Panc1 (cell line): ENCODE measurements at regions of chr7 and their contacts with region 1.

Region 1: DNA sequence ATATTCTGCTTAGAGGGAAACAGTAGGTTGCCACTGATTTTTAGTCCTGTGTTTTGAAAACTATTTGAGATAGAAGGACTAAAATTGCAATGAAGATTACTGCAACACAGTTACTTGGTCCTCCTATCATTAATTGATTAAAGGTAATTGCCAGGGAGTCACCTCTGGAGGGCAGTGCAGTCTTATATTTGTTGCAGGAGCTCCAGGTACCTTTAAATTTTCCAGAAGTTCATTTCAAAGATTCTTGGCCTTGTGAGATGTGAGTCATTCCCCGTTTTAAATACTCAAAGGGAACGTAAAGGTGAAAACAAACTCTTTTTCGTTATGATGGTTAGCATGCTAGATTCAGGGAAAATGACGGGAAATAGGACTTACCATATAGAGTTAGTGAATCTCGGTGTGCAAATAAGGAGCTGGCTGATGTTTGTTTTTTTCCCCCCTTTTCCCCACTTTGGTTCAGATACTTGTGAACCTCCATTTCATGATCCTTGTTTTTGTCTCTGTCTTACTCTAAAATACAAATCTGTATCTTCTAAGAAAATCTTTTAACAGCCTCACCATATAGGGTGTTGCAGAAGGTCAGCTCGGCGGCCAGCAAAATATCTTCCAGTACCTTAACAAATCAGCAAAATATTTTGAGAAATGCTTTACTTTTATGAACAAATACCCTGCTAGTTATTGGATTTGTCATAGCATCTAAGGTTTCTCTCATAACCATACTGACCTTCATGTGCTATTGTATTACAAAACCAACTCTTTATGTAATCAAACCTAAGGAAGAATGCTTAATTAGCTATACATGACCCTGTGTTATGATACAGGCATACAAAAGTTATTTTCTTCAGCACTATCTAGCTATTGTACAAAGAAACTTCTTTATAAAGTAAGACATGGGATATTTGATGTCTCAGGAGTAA is 143.0 kb upstream of the HDAC9 start:
- DNase-seq: peak; percentile 58
- ATAC-seq: peak; percentile 87
- H3K4me3 ChIP-seq: no peak overlapping the region; a peak in 1 of 4 replicates
- H3K27ac ChIP-seq: peak overlapping the region; percentile 67
- H3K4me1 ChIP-seq: peaks cover 32% of the 10 kb centered on the region
- H3K27me3 ChIP-seq: no peaks in the 10 kb centered on the region
- CTCF ChIP-seq: peak; percentile 80; the same call in 1 of the 2 replicates

Region 2: DNA sequence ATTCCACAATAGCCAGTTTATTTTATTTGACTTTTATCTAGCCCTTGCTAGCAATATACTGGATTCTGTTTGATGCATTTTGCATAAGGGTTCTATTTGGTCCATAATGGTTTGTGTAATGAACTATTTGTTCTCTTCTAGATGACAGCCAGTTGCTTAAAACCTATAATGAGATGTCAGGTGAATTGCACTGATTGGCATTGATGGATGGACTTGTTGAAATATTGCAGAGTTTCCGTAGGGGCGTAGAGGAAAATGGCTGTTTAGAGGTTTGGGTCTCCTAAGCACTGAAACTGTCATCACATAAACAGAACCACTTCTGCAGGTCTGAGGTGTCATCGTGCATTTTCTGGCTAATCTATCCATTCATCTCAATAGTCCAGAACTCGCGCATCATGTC is 18.0 kb after region 1 on chr7:
- CTCF ChIA-PET with region 1: no interaction called
- POLR2A ChIA-PET with region 1: no interaction called
- in situ Hi-C with region 1: no loop called
- intact Hi-C with region 1: no loop called
- DNase-seq: no peak
- ATAC-seq: no peak
- H3K4me3 ChIP-seq: no peak overlapping the region
- H3K27ac ChIP-seq: no peak overlapping the region
- H3K4me1 ChIP-seq: no peaks in the 10 kb centered on the region
- H3K27me3 ChIP-seq: no peaks in the 10 kb centered on the region
- CTCF ChIP-seq: no peak

Region 3: DNA sequence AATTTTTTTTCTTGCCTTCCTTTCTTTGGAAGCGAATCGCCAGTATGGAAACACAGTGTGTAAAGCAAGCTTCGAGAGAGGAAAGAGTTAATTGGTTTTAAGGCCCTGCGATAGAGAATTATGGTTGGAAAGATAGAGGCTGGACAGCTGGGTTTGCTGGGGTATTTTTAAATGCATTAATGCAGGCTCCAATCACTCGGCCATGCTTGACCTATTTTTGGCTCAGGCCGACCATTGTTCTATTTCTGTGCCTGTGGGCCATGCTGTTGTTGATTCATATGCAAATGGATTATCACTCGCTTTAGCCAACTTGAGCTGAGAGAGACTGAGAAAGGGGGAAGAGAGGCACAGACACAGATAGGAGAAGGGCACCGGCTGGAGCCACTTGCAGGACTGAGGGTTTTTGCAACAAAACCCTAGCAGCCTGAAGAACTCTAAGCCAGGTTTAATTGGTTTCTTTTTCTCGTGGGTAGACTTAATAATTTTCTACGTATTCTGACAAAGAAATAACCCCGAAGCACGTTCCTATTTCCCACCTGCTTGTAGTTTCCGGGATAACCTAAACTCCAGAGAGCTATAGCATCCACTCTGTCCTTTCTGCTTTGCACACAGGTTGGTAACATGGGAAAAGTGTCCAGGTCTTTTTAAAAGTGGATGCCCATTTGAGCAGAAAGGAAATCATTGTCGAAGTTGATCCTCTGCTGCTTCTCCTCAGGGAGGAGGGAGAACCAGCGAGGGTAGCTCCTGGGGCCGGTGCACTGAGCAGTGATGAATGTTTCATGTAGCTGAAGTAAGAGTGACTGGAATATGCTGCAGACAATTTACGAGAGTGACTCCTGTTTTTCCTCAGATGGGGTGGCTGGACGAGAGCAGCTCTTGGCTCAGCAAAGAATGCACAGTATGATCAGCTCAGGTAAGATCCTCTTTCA is 143.1 kb after region 1 on chr7 and contains the start of gene HDAC9:
- CTCF ChIA-PET with region 1: no interaction called
- POLR2A ChIA-PET with region 1: no interaction called
- in situ Hi-C with region 1: no loop called
- intact Hi-C with region 1: loop called (anchors 10 kb)
- DNase-seq: no peak
- ATAC-seq: peak; percentile 91
- H3K4me3 ChIP-seq: peak within 1 kb of the TSS; percentile 44 to 64
- H3K27ac ChIP-seq: peak within 1 kb of the TSS; percentile 74
- H3K4me1 ChIP-seq: peaks cover 29% of the 10 kb centered on the region
- H3K27me3 ChIP-seq: no peaks in the 10 kb centered on the region
- CTCF ChIP-seq: no peak
- total RNA-seq, gene HDAC9: 17.1 TPM

Region 4: DNA sequence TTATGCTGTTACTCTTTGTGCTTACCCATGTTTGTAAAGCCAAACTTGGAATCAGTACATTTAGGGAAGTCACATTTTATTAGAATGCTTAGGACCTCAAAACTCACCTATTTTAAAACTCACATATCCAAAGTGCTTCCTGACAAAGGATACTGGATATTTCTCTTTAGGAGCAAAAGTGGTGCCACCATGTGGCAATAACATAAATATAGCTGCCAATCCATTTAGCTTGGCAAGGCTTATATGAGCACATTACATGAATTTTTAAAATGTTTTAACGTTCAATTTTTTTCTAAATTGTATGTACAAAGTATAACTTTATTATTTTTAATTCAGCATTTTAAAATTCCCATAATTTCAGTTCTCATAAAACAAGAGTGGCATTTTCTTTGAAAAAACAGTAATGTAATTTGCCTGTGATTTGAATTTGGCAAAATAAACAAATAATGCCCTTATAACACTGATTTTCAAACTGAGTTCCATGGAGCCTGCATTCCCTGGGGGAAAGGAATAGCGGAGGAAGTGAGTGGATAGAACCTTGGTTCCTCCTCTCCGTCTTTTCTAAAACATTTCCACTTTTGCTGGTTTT is 218.4 kb after region 1 on chr7:
- CTCF ChIA-PET with region 1: interaction called, 43 read pairs
- POLR2A ChIA-PET with region 1: no interaction called
- in situ Hi-C with region 1: no loop called
- intact Hi-C with region 1: loop called (anchors 2 kb)
- DNase-seq: no peak
- ATAC-seq: peak; percentile 87
- H3K4me3 ChIP-seq: no peak overlapping the region
- H3K27ac ChIP-seq: peak overlapping the region; percentile 64
- H3K4me1 ChIP-seq: peaks cover 6% of the 10 kb centered on the region
- H3K27me3 ChIP-seq: no peaks in the 10 kb centered on the region
- CTCF ChIP-seq: peak; percentile 73; the same call in 1 of the 2 replicates

Region 5: DNA sequence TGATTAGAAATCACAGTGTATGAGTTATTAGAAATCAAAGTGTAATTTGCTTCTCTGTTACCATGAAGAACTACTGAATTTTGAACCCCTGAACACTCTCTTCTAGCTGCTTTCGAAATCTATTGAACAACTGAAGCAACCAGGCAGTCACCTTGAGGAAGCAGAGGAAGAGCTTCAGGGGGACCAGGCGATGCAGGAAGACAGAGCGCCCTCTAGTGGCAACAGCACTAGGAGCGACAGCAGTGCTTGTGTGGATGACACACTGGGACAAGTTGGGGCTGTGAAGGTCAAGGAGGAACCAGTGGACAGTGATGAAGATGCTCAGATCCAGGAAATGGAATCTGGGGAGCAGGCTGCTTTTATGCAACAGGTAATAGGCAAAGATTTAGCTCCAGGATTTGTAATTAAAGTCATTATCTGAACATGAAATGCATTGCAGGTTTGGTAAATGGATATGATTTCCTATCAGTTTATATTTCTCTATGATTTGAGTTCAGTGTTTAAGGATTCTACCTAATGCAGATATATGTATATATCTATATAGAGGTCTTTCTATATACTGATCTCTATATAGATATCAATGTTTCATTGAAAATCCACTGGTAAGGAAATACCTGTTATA is 313.6 kb after region 1 on chr7:
- CTCF ChIA-PET with region 1: interaction called, 5 read pairs
- POLR2A ChIA-PET with region 1: no interaction called
- in situ Hi-C with region 1: no loop called
- intact Hi-C with region 1: loop called (anchors 5 kb)
- DNase-seq: peak; percentile 68
- ATAC-seq: peak; percentile 93
- H3K4me3 ChIP-seq: no peak overlapping the region
- H3K27ac ChIP-seq: no peak overlapping the region
- H3K4me1 ChIP-seq: peaks cover 12% of the 10 kb centered on the region; the same call in 1 of the 2 replicates
- H3K27me3 ChIP-seq: no peaks in the 10 kb centered on the region
- CTCF ChIP-seq: peak; percentile 98

Region 6: GRCh38 chr7:19121977-19122588 is 769.5 kb after region 1 on chr7:
- CTCF ChIA-PET with region 1: no interaction called
- POLR2A ChIA-PET with region 1: no interaction called
- in situ Hi-C with region 1: no loop called
- intact Hi-C with region 1: loop called (anchors 10 kb)
- DNase-seq: peak; percentile 22
- ATAC-seq: no peak
- H3K4me3 ChIP-seq: no peak overlapping the region
- H3K27ac ChIP-seq: no peak overlapping the region; the same call in 1 of the 2 replicates
- H3K4me1 ChIP-seq: no peaks in the 10 kb centered on the region
- H3K27me3 ChIP-seq: no peaks in the 10 kb centered on the region
- CTCF ChIP-seq: peak; percentile 89; the same call in 1 of the 2 replicates

Region 7: GRCh38 chr7:19491821-19492452 is 1139.3 kb after region 1 on chr7:
- CTCF ChIA-PET with region 1: no interaction called
- POLR2A ChIA-PET with region 1: interaction called, 10 read pairs
- in situ Hi-C with region 1: no loop called
- intact Hi-C with region 1: no loop called
- DNase-seq: peak; percentile 12
- ATAC-seq: no peak
- H3K4me3 ChIP-seq: no peak overlapping the region
- H3K27ac ChIP-seq: no peak overlapping the region
- H3K4me1 ChIP-seq: no peaks in the 10 kb centered on the region
- H3K27me3 ChIP-seq: no peaks in the 10 kb centered on the region
- CTCF ChIP-seq: peak; percentile 71; the same call in 1 of the 2 replicates

Region 8: GRCh38 chr7:19665399-19666008 is 1312.9 kb after region 1 on chr7:
- CTCF ChIA-PET with region 1: interaction called, 3 read pairs
- POLR2A ChIA-PET with region 1: no interaction called
- in situ Hi-C with region 1: loop called (anchors 25 kb)
- intact Hi-C with region 1: loop called (anchors 2 kb)
- DNase-seq: no peak
- ATAC-seq: peak; percentile 72
- H3K4me3 ChIP-seq: no peak overlapping the region
- H3K27ac ChIP-seq: peak overlapping the region; percentile 74; the same call in 1 of the 2 replicates
- H3K4me1 ChIP-seq: peaks cover 17% of the 10 kb centered on the region
- H3K27me3 ChIP-seq: no peaks in the 10 kb centered on the region
- CTCF ChIP-seq: peak; percentile 72; the same call in 1 of the 2 replicates